A549 (cell line): ENCODE measurements at regions of chr9 and their contacts with region 1.

Region 1: DNA sequence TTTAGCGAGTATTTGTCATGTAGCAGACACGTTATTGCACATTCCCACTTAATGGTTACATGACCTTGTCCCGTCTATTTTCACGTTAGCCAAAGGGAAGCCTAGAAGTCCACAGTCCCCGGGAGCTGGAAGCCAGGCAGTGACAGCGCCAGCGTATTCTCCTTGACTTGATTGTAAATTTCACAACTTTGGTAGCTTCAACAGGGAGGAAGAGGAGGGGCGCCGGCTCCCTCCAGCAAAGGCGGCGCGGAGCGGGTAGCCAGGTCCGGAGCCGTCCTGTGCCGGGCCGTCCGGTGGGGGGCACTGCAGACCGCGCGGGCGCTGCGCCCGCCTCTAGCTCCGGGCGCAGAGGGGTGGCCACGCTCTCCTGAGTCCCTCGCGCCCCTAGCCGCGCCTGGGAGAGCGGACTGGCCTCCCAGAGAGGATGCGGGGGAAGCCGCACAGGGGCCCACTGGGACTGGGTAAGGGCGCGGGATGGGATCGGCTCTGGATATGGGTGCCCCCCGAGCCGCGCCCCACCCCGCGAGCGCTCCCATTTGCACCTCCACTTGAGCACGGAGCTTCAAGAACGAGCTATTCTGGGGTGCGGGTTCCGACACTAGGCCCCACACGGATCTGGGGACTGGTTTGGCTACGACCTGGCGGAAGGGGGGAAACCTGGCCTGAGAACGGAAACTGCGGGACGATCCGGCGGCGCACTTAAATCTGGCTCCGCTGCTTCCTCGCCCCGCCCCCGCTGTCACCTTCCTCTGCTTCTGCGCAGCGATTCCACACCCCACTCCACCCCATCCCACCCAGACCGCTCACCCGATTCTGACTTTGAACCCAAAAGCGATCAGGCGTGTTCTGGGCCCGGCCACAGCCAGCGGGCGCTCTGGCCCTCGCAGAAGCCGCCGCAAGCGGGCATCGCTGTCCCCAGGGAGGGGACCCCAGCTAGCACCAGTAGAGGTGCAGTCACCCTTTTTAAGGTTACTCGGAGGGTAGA is 23.8 kb downstream of the KLF4 start:
- DNase-seq: peak; percentile 50 to 84
- ATAC-seq: peak; percentile 99 to 100
- H3K4me3 ChIP-seq: peak overlapping the region; percentile 79
- H3K27ac ChIP-seq: peak overlapping the region; percentile 80 to 83
- H3K4me1 ChIP-seq: peaks cover 9% of the 10 kb centered on the region; the same call in 1 of the 3 replicates
- CTCF ChIP-seq: peak; percentile 92
- EP300 ChIP-seq: no peak
- POLR2A ChIP-seq: no peak
- RAD21 ChIP-seq: peak; percentile 74 to 96

Region 2: DNA sequence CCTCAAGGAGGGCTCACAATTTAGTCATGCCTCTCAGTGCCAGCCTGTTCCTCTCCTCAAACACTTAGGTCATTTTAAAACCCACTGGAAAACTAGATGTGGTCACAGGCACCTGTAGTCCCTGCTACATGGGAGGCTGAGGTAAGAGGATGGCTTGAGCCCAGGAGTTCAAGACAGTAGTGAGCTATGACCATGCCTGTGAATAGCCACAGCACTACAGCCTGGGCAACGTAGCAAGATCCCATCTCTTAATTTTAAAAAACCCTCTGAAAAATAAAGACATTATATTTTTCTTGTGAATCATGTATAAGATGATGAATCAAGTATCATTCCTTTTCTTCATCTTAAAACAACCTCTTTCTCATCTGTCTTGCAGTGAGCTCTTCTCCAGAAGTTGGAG is 22.0 kb before region 1 on chr9:
- CTCF ChIA-PET with region 1: interaction called, 14 read pairs
- POLR2A ChIA-PET with region 1: no interaction called
- DNase-seq: no peak
- ATAC-seq: no peak
- H3K4me3 ChIP-seq: no peak overlapping the region
- H3K27ac ChIP-seq: no peak overlapping the region
- H3K4me1 ChIP-seq: no peaks in the 10 kb centered on the region; the same call in 2 of the 3 replicates
- CTCF ChIP-seq: no peak
- EP300 ChIP-seq: no peak
- POLR2A ChIP-seq: no peak
- RAD21 ChIP-seq: no peak

Region 3: GRCh38 chr9:107484117-107484723 is 18.5 kb after region 1 on chr9:
- CTCF ChIA-PET with region 1: interaction called, 48 read pairs
- POLR2A ChIA-PET with region 1: no interaction called
- DNase-seq: peak; percentile 51 to 84
- ATAC-seq: peak; percentile 57 to 68; a peak in 4 of 6 replicates
- H3K4me3 ChIP-seq: no peak overlapping the region
- H3K27ac ChIP-seq: no peak overlapping the region
- H3K4me1 ChIP-seq: peaks cover 19% of the 10 kb centered on the region
- CTCF ChIP-seq: peak; percentile 83
- EP300 ChIP-seq: no peak
- POLR2A ChIP-seq: no peak
- RAD21 ChIP-seq: peak; percentile 94 to 97

Region 4: GRCh38 chr9:107600060-107600573 is 134.4 kb after region 1 on chr9:
- CTCF ChIA-PET with region 1: no interaction called
- POLR2A ChIA-PET with region 1: no interaction called
- DNase-seq: no peak
- ATAC-seq: no peak
- H3K4me3 ChIP-seq: no peak overlapping the region
- H3K27ac ChIP-seq: no peak overlapping the region
- H3K4me1 ChIP-seq: no peaks in the 10 kb centered on the region
- CTCF ChIP-seq: no peak
- EP300 ChIP-seq: no peak
- POLR2A ChIP-seq: no peak
- RAD21 ChIP-seq: no peak

Region 5: DNA sequence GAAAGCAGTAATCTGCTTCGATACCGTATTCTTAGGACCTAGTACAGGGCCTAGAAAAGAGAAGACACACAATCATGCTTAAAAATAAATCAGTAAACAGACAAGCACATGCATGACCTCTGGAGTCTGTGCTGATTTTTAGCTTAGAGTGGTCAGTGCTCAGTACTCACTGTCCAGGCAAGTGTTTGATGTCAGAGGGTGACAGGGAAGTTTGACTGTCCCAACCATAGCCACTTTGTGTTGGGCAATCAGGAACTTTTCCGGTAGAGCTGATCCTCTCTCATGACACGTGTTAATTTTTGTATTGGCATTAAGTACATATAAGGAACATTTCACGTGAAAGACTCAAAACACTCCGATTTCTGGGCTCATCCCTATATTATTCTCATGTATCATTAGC is 488.6 kb after region 1 on chr9:
- CTCF ChIA-PET with region 1: no interaction called
- POLR2A ChIA-PET with region 1: no interaction called
- DNase-seq: no peak
- ATAC-seq: no peak
- H3K4me3 ChIP-seq: no peak overlapping the region
- H3K27ac ChIP-seq: no peak overlapping the region
- H3K4me1 ChIP-seq: no peaks in the 10 kb centered on the region
- CTCF ChIP-seq: no peak
- EP300 ChIP-seq: no peak
- POLR2A ChIP-seq: no peak
- RAD21 ChIP-seq: no peak

Region 6: GRCh38 chr9:108272349-108272899 is 806.7 kb after region 1 on chr9:
- CTCF ChIA-PET with region 1: interaction called, 12 read pairs
- POLR2A ChIA-PET with region 1: no interaction called
- DNase-seq: peak; percentile 61 to 71
- ATAC-seq: peak; percentile 79 to 95
- H3K4me3 ChIP-seq: no peak overlapping the region
- H3K27ac ChIP-seq: peak overlapping the region; percentile 48 to 77
- H3K4me1 ChIP-seq: peaks cover 25% of the 10 kb centered on the region
- CTCF ChIP-seq: peak; percentile 71
- EP300 ChIP-seq: no peak
- POLR2A ChIP-seq: no peak
- RAD21 ChIP-seq: peak; percentile 85 to 86

Region 7: DNA sequence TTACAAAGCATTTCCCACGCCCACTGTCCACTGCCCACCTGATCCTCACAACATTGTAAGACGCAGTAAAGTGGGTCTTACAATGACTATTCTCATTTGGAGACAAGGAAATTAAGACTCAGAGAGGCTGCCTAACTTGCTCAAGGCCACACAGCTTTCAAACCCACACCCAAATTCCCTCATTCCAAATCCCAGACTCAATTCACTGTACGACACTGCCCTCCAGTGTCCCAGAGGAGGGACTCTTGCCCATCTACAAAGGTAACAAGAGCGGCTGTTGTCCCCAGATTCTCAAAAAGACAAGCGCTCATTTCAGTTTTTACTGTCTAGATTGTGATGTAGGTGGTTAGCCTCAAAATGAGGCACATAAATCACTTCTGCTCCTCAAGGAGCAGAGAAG is 1205.4 kb after region 1 on chr9:
- CTCF ChIA-PET with region 1: interaction called, 18 read pairs
- POLR2A ChIA-PET with region 1: no interaction called
- DNase-seq: peak; percentile 37 to 45
- ATAC-seq: peak in 1 of 2 experiments; percentile 65; a peak in 2 of 6 replicates
- H3K4me3 ChIP-seq: no peak overlapping the region
- H3K27ac ChIP-seq: no peak overlapping the region
- H3K4me1 ChIP-seq: peaks cover 9% of the 10 kb centered on the region; the same call in 2 of the 3 replicates
- CTCF ChIP-seq: peak; percentile 56; the same call in 2 of the 3 replicates
- EP300 ChIP-seq: no peak
- POLR2A ChIP-seq: no peak
- RAD21 ChIP-seq: peak; percentile 79 to 81

Region 8: DNA sequence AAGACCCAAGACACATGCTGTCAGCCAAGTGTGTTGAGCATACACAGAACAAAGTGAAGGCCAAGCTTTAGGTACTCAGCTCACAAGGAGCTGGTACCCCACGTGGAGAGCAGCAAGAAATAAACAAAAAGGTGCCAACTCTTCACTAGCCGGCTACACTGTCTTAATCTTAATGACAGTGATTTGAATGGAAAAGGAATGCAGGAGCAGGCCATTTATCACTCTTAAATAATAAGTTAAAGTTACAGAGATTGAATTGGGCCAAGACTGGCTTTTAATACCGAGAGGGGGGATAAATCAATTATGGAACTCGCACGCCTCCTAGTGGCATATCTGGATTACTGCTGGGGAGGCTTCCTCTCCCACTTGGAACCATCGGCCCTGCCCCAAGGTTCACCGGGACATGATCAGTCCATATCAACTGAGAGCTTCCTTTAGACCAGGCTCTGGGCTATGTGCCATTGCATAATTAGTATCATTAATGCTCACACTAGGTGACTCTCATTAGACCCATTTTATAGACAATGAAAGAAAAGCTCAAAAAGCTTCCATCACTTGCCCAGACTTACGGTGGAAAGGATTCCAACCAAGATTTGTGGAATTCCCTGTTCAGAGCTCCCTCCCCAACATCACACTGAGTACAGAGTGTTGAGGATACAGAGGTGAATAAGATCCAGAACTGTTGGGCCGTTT is 1296.0 kb after region 1 on chr9:
- CTCF ChIA-PET with region 1: interaction called, 50 read pairs
- POLR2A ChIA-PET with region 1: no interaction called
- DNase-seq: peak; percentile 50 to 85
- ATAC-seq: peak; percentile 70 to 93
- H3K4me3 ChIP-seq: no peak overlapping the region
- H3K27ac ChIP-seq: peak overlapping the region; percentile 12 to 25; a peak in 2 of 6 replicates
- H3K4me1 ChIP-seq: no peaks in the 10 kb centered on the region
- CTCF ChIP-seq: peak; percentile 91
- EP300 ChIP-seq: no peak
- POLR2A ChIP-seq: no peak
- RAD21 ChIP-seq: peak; percentile 93 to 96